ENCODE measurements at regions of chr16 and their contacts with region 1.

Region 1: GRCh38 chr16:70523076-70523742 is at the start of gene COG4:
- DNase-seq: peak; percentile 86
- H3K4me3 Mint-ChIP-seq: peak within 1 kb of the TSS; percentile 96
- H3K27ac Mint-ChIP-seq: peak within 1 kb of the TSS; percentile 98
- H3K4me1 Mint-ChIP-seq: peaks cover 41% of the 10 kb centered on the region
- H3K27me3 Mint-ChIP-seq: no peaks in the 10 kb centered on the region
- total RNA-seq, gene COG4: 37.9 and 44.5 TPM in 2 replicates

Region 2: GRCh38 chr16:69761983-69762813 is 761.0 kb before region 1 on chr16 and contains the start of gene WWP2:
- intact Hi-C with region 1: loop called (anchors 5 kb)
- DNase-seq: peak; percentile 66
- H3K4me3 Mint-ChIP-seq: peak within 1 kb of the TSS; percentile 91
- H3K27ac Mint-ChIP-seq: peak within 1 kb of the TSS; percentile 96
- H3K4me1 Mint-ChIP-seq: peaks cover 23% of the 10 kb centered on the region
- H3K27me3 Mint-ChIP-seq: no peaks in the 10 kb centered on the region
- total RNA-seq, gene WWP2: 59.0 and 61.7 TPM in 2 replicates

Region 3: GRCh38 chr16:70289229-70290098 is 233.7 kb before region 1 on chr16 and contains the start of gene AARS1:
- intact Hi-C with region 1: loop called (anchors 2 kb)
- DNase-seq: peak; percentile 96
- H3K4me3 Mint-ChIP-seq: peak within 1 kb of the TSS; percentile 97
- H3K27ac Mint-ChIP-seq: peak within 1 kb of the TSS; percentile 98
- H3K4me1 Mint-ChIP-seq: peaks cover 19% of the 10 kb centered on the region
- H3K27me3 Mint-ChIP-seq: no peaks in the 10 kb centered on the region
- total RNA-seq, gene AARS1: 103 and 106 TPM in 2 replicates

Region 4: DNA sequence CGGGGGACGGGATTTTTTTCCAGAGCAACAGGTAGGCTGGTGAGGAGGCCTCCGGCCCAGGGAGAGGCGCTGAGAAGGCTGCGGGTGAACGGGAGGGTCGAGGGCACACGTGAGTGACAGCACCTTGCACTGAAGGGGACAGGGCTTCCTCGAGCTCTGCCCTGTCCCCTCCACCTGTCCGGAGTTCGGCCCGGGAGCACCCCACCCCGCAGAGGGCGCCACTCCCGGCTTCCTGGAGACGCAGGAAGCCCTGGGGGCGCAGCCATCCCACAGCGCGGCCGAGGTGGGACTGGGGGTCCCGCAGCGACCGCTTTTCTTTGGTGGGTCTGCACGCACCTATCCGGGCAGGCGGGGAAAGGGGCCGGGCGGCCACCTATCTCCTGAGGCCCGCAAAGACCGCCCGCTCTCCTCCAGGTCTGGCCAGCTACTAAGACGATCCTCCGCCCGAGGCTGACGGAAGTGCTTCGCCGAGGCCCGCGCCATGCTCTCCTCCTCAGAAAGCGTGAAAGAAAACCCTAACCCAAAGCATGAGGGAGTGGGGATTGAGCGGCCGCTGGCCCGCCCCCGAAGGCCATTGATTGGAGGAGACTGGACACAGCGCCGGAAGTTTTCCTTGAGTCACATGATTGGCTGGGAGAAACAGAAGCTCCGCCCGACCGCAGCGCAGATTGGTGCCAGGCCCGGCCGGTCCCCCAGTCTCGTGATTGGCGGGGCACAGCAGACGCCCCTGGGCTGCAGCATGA is 142.2 kb before region 1 on chr16:
- intact Hi-C with region 1: loop called (anchors 1 kb)
- DNase-seq: peak; percentile 97
- H3K4me3 Mint-ChIP-seq: peak overlapping the region; percentile 98
- H3K27ac Mint-ChIP-seq: peak overlapping the region; percentile 99
- H3K4me1 Mint-ChIP-seq: peaks cover 2% of the 10 kb centered on the region
- H3K27me3 Mint-ChIP-seq: no peaks in the 10 kb centered on the region

Region 5: DNA sequence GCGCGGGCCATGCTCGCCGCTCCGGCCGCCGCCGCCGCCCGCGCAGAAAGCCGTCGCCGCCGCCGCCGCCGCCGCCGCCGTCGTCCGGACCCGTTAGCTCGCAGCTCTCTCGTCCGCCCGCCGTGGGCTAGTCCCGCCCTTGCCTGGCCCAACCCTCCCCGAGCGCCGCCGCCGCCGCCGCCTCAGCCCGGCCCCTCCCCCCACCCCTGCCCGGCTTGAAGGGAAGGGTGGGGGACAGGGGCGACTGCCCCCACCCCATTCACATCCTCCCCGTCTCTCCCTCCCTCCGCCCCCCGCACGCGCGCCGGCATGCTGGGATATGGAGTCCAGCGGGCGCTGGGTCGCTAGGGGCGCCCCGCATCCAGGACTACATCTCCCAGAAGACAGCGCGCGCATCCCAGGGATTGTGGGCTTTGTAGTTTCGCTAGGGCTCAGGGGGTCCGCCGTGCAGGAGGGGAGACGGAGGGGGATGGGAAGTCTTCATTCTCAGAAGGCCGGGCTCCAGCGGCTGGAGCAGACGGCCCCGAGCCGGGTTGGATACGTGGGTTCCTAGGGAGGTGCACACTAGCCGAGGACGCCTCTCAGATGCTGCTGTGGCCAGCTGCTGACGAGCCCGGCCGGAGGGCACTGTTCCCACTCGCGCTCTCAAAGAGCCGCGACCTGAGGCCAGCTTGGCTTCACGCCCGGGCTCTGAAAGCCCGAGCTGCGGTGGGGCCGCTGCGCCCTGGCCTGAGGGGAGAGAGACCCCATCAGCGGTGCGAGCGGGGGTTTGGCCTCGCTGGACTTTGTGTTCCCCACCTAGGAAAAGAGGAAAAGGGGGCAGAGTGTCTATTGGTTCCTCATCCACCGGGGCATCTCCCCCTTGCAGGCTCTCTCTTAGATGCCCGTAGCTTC is 84.0 kb before region 1 on chr16 and contains the start of gene ST3GAL2:
- intact Hi-C with region 1: loop called (anchors 2 kb)
- DNase-seq: peak; percentile 91
- H3K4me3 Mint-ChIP-seq: peak within 1 kb of the TSS; percentile 91
- H3K27ac Mint-ChIP-seq: peak within 1 kb of the TSS; percentile 89
- H3K4me1 Mint-ChIP-seq: peaks cover 21% of the 10 kb centered on the region
- H3K27me3 Mint-ChIP-seq: no peaks in the 10 kb centered on the region
- total RNA-seq, gene ST3GAL2: 33.0 and 35.1 TPM in 2 replicates

Region 6: DNA sequence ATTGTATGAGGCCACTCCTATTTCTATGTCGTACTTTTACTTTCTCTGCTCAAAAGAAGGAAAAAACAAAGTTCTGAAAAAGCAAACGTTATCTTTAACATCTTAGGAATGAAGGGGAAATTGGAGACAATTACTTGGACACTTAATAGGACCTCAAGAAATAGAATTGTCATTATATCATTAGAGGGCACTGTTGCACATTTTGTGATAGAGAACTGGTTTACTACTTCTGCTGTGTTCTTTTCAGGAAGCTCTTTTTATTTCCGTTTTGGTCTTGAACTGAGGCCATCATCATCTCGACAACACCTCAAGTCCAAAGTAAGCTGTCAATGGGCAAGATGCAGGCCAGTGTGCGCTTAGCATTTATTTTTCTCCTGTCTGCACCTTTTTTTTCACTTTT is 14.5 kb before region 1 on chr16:
- intact Hi-C with region 1: no loop called
- DNase-seq: no peak
- H3K4me3 Mint-ChIP-seq: no peak overlapping the region
- H3K27ac Mint-ChIP-seq: peak overlapping the region; percentile 36
- H3K4me1 Mint-ChIP-seq: peaks cover 6% of the 10 kb centered on the region
- H3K27me3 Mint-ChIP-seq: no peaks in the 10 kb centered on the region

Region 7: GRCh38 chr16:70675851-70676513 is 152.8 kb after region 1 on chr16:
- intact Hi-C with region 1: no loop called
- DNase-seq: no peak
- H3K4me3 Mint-ChIP-seq: no peak overlapping the region
- H3K27ac Mint-ChIP-seq: no peak overlapping the region
- H3K4me1 Mint-ChIP-seq: peaks cover 1% of the 10 kb centered on the region
- H3K27me3 Mint-ChIP-seq: peaks cover 2% of the 10 kb centered on the region

Region 8: DNA sequence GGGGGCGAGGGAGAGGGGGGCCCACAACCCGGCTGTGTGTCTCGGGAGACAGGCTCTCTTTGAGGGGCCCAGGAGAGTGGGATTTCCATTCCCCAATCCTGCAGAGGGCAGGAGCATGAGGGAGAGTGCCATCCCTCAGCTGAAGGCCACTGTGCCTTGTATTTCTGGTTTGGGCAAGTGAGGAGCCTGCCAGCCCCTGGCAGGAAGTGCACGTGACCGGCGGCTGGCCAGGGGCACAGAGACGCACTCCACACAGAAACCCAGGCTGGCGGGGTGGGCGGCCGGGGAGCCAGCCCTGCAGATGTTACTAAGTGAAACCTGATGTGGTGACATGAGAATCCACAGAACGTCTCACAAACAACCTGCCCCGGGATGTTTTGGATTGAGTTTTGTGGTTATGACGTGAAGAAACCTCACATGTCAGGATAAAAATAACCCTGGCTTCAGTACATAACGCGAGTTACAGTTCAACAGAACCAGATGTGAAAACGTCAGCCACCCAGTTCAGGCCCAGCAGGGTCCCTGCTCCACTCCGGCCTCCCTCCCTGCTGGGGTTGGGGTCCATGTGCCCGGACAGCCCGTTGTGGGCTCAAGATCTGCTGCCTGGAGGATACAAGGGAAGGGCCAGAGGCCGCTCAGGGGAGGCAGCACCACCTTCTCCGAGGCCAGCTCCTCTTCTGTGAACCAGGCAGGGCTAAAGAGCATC is 214.3 kb after region 1 on chr16:
- intact Hi-C with region 1: loop called (anchors 10 kb)
- DNase-seq: peak; percentile 78
- H3K4me3 Mint-ChIP-seq: peak overlapping the region; percentile 62
- H3K27ac Mint-ChIP-seq: peak overlapping the region; percentile 96
- H3K4me1 Mint-ChIP-seq: peaks cover 46% of the 10 kb centered on the region
- H3K27me3 Mint-ChIP-seq: no peaks in the 10 kb centered on the region

Region 9: DNA sequence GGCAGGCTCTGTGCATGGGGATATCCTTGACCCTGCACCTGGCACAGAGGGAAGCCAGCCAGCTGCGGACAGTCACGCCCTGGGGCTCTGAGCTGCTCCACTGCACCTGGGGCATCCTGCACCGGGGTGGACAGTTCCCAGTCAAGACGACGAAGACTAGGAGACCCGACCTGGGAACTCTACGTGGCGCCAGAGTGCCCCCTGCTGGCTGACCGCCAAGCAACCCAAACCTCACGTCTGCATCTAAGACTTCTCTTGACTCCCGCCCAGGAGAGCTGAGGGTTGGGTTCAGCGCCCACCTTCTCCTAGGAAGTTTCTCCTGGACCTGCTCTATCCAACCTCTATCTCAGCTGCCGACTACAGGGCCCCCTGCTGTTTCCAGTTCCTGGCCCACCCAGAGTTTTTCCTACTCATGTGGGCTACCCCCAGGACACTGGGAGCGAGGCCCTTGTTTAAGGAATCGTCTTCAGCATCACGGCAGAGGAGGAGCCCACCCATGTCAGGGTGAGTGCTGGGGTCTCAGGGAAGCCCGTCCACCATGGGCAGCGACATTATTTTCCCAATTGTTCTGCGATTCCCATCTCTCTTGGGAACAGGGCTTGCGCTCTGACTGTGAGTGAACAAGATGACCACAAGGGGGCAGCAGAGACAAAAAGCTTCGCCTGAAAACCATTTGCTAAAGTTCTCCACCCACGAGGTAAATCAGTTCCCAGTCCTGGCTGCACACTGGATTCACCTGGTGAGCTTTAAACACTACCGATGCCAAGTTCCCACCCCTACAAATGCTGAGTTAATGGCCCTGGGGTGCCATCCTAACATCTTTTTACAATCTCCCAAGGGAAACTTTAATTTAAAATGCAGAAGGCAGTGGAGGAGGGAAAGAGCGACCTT is 889.3 kb after region 1 on chr16:
- intact Hi-C with region 1: no loop called
- DNase-seq: peak; percentile 46
- H3K4me3 Mint-ChIP-seq: no peak overlapping the region
- H3K27ac Mint-ChIP-seq: no peak overlapping the region
- H3K4me1 Mint-ChIP-seq: peaks cover 8% of the 10 kb centered on the region
- H3K27me3 Mint-ChIP-seq: peaks cover 19% of the 10 kb centered on the region